ENCODE measurements at regions of chr2 and their contacts with region 1.

Region 1: GRCh38 chr2:234951664-234952269 is at the start of gene SH3BP4:
- DNase-seq: peak; percentile 62
- ATAC-seq: peak; percentile 68
- H3K4me3 ChIP-seq: peak within 1 kb of the TSS; percentile 83
- H3K27ac ChIP-seq: peak within 1 kb of the TSS; percentile 29
- H3K4me1 ChIP-seq: peaks cover 32% of the 10 kb centered on the region
- H3K27me3 ChIP-seq: no peaks in the 10 kb centered on the region
- CTCF ChIP-seq: no peak
- total RNA-seq, gene SH3BP4: 35.2 and 47.3 TPM in 2 replicates

Region 2: DNA sequence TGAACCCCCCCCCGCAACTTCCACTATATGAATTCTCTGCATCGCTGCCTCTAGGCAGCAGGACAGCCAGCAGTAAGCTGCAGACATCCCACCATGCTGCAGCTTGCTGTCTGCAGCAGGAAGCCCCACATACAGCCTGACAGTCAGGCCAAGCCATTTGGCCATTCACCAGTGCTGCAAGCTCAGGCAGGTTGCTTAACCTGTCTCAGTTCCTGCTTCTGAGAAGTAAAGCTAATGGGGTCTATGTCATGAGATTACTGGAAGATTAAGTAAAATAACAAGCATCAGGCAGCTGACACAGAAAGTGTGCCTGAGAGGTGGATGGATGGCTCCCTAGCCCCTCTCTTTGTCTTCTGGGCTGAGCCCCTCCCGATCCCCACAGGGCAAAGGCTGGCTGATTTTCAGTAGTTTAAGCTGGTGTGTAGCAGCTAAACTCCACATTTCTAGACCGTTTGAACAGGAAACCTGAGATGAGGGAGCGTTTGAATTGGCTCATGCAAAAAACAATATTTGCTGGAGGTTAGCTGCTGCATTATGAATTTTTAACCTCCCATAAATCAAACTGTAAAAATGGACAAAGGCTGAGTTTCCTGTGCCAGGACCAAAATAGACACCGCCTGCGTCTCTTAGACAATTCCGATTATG is 261.1 kb before region 1 on chr2:
- CTCF ChIA-PET with region 1: no interaction called
- POLR2A ChIA-PET with region 1: interaction called, 7 read pairs
- intact Hi-C with region 1: loop called (anchors 5 kb)
- DNase-seq: peak; percentile 67
- ATAC-seq: peak; percentile 88
- H3K4me3 ChIP-seq: peak overlapping the region; percentile 21; the same call in 1 of the 2 replicates
- H3K27ac ChIP-seq: peak overlapping the region; percentile 58
- H3K4me1 ChIP-seq: peaks cover 34% of the 10 kb centered on the region
- H3K27me3 ChIP-seq: no peaks in the 10 kb centered on the region
- CTCF ChIP-seq: no peak

Region 3: GRCh38 chr2:234881413-234882241 is 70.1 kb before region 1 on chr2:
- CTCF ChIA-PET with region 1: no interaction called
- POLR2A ChIA-PET with region 1: no interaction called
- intact Hi-C with region 1: loop called (anchors 2 kb)
- DNase-seq: peak; percentile 93
- ATAC-seq: peak; percentile 94
- H3K4me3 ChIP-seq: peak overlapping the region; percentile 62
- H3K27ac ChIP-seq: peak overlapping the region; percentile 67
- H3K4me1 ChIP-seq: peaks cover 33% of the 10 kb centered on the region
- H3K27me3 ChIP-seq: no peaks in the 10 kb centered on the region
- CTCF ChIP-seq: peak; percentile 94

Region 4: GRCh38 chr2:234981197-234982117 is 29.7 kb after region 1 on chr2:
- CTCF ChIA-PET with region 1: interaction called, 3 read pairs
- POLR2A ChIA-PET with region 1: interaction called, 9 read pairs
- intact Hi-C with region 1: loop called (anchors 2 kb)
- DNase-seq: peak; percentile 94
- ATAC-seq: peak; percentile 79
- H3K4me3 ChIP-seq: peak overlapping the region; percentile 67
- H3K27ac ChIP-seq: peak overlapping the region; percentile 96
- H3K4me1 ChIP-seq: peaks cover 53% of the 10 kb centered on the region
- H3K27me3 ChIP-seq: no peaks in the 10 kb centered on the region
- CTCF ChIP-seq: peak; percentile 26; the same call in 1 of the 2 replicates

Region 5: GRCh38 chr2:235026649-235027557 is 75.1 kb after region 1 on chr2:
- CTCF ChIA-PET with region 1: no interaction called
- POLR2A ChIA-PET with region 1: no interaction called
- intact Hi-C with region 1: loop called (anchors 2 kb)
- DNase-seq: peak; percentile 99
- ATAC-seq: peak; percentile 73
- H3K4me3 ChIP-seq: peak overlapping the region; percentile 65
- H3K27ac ChIP-seq: peak overlapping the region; percentile 98
- H3K4me1 ChIP-seq: peaks cover 68% of the 10 kb centered on the region
- H3K27me3 ChIP-seq: no peaks in the 10 kb centered on the region
- CTCF ChIP-seq: no peak

Region 6: GRCh38 chr2:235087812-235088495 is 136.2 kb after region 1 on chr2:
- CTCF ChIA-PET with region 1: no interaction called
- POLR2A ChIA-PET with region 1: no interaction called
- intact Hi-C with region 1: no loop called
- DNase-seq: no peak
- ATAC-seq: no peak
- H3K4me3 ChIP-seq: no peak overlapping the region
- H3K27ac ChIP-seq: no peak overlapping the region
- H3K4me1 ChIP-seq: no peaks in the 10 kb centered on the region
- H3K27me3 ChIP-seq: no peaks in the 10 kb centered on the region
- CTCF ChIP-seq: no peak

Region 7: DNA sequence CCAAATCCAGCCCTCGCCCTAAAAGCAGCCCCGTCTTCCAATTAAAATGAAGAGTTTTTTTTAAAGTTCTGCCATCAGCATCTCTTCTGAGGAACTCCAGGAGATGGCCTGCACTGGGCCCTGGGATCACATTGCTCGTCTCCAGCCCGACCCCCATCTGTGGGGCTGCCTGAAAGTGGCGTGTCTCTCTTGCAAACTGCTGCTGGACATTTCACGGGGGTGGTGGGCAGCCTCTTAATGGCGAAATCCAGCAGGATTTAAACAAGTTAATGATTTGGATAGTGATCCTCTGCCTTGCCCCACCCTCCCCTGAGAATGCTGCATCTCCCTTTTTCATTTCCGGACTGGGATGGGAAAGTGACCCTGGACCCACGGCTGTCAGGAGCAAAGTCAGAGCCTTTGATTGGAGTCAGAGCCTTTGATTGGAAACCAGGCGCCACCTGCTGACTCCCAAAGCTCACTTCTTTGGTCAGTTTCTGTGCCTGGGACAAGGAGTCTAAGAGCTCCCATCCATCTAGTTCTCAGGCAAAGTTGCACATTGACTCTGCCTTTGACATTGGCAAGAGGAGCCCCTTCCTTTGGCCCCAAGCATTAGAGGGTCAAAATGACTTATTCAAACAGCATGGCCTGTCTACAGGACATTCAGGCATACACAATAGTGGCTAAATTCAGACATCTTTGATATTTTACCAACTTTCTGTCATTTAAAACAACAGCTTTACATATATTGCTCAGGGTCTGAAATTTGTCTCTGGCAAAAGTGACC is 155.3 kb after region 1 on chr2:
- CTCF ChIA-PET with region 1: interaction called, 12 read pairs
- POLR2A ChIA-PET with region 1: interaction called, 3 read pairs
- intact Hi-C with region 1: loop called (anchors 5 kb)
- DNase-seq: peak; percentile 81
- ATAC-seq: peak; percentile 93
- H3K4me3 ChIP-seq: no peak overlapping the region
- H3K27ac ChIP-seq: no peak overlapping the region
- H3K4me1 ChIP-seq: no peaks in the 10 kb centered on the region
- H3K27me3 ChIP-seq: no peaks in the 10 kb centered on the region
- CTCF ChIP-seq: peak; percentile 87